ENCODE measurements at regions of chr1 and their contacts with region 1.

Region 1: GRCh38 chr1:53959664-53960250 is 13.6 kb downstream of the LRRC42 start:
- DNase-seq: peak in 3 of 9 experiments; percentile 17 to 70 (median 60)
- ATAC-seq: peak; percentile 93
- H3K4me3 ChIP-seq: no peak overlapping the region
- H3K4me3 Mint-ChIP-seq: no peak overlapping the region
- H3K27ac ChIP-seq: no peak overlapping the region
- H3K27ac Mint-ChIP-seq: no peak overlapping the region
- H3K4me1 ChIP-seq: no peaks in the 10 kb centered on the region
- H3K4me1 Mint-ChIP-seq: peaks cover 1% of the 10 kb centered on the region
- H3K27me3 ChIP-seq: no peaks in the 10 kb centered on the region
- H3K27me3 Mint-ChIP-seq: no peaks in the 10 kb centered on the region
- CTCF ChIP-seq: peak; percentile 76

Region 2: GRCh38 chr1:53249706-53250105 is 710.1 kb before region 1 on chr1:
- CTCF ChIA-PET with region 1: no interaction called
- POLR2A ChIA-PET with region 1: no interaction called
- intact Hi-C with region 1: no loop called
- DNase-seq: no peak
- ATAC-seq: no peak
- H3K4me3 ChIP-seq: no peak overlapping the region
- H3K4me3 Mint-ChIP-seq: no peak overlapping the region
- H3K27ac ChIP-seq: no peak overlapping the region
- H3K27ac Mint-ChIP-seq: no peak overlapping the region
- H3K4me1 ChIP-seq: no peaks in the 10 kb centered on the region
- H3K4me1 Mint-ChIP-seq: no peaks in the 10 kb centered on the region
- H3K27me3 ChIP-seq: no peaks in the 10 kb centered on the region
- H3K27me3 Mint-ChIP-seq: no peaks in the 10 kb centered on the region
- CTCF ChIP-seq: no peak

Region 3: DNA sequence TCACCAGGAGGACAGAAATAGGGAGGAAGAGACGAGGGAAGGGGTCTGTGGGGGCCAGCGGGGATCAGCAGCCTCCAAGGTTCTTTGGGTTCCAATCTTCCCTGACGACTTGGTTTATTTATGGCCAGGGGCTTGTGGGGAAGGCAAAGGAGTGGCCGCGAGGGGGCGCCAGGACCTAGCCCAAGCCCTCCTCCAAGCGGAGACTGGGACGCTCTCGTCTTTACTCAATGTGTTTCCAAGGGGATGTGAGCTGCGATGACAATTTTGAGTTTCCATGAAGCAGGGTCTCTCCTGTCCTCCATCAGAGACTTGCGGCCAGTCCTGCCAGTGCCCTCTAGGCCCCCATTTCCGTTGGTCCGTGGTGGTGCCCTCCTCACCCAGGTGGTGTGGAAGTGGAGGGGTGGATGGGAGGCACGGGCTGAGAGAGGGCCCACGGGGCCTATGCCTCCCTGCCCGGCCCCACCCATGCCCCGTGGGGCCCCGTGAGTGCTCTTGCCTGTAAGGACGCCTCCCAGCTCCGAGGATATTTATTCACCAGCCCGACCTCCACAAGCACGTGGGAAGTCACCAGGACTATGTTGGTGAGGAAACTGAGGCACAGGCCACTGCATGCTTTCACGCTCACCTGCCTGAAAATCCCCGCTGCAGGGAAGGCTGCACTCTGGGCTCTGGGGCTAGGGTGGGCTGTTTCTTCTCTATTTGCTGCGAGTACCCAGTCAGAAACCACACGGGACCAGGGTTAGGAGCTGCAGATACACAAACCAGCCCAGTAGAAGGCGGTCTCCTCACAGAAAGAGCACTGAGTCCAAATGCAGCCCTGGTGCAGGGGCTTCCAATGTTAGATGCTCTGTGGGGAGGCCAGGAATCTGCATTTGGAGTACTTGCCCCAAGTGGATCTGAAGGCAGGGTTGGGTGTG is 474.0 kb before region 1 on chr1:
- CTCF ChIA-PET with region 1: interaction called, 4 read pairs
- POLR2A ChIA-PET with region 1: no interaction called
- intact Hi-C with region 1: loop called (anchors 5 to 10 kb)
- DNase-seq: peak; percentile 38 to 79 (median 67)
- ATAC-seq: peak; percentile 44
- H3K4me3 ChIP-seq: no peak overlapping the region
- H3K4me3 Mint-ChIP-seq: no peak overlapping the region
- H3K27ac ChIP-seq: no peak overlapping the region
- H3K27ac Mint-ChIP-seq: no peak overlapping the region
- H3K4me1 ChIP-seq: no peaks in the 10 kb centered on the region
- H3K4me1 Mint-ChIP-seq: peaks cover 5% of the 10 kb centered on the region
- H3K27me3 ChIP-seq: peaks cover 2 to 6% of the 10 kb centered on the region in 2 experiments
- H3K27me3 Mint-ChIP-seq: peaks cover 21% of the 10 kb centered on the region
- CTCF ChIP-seq: peak; percentile 62

Region 4: DNA sequence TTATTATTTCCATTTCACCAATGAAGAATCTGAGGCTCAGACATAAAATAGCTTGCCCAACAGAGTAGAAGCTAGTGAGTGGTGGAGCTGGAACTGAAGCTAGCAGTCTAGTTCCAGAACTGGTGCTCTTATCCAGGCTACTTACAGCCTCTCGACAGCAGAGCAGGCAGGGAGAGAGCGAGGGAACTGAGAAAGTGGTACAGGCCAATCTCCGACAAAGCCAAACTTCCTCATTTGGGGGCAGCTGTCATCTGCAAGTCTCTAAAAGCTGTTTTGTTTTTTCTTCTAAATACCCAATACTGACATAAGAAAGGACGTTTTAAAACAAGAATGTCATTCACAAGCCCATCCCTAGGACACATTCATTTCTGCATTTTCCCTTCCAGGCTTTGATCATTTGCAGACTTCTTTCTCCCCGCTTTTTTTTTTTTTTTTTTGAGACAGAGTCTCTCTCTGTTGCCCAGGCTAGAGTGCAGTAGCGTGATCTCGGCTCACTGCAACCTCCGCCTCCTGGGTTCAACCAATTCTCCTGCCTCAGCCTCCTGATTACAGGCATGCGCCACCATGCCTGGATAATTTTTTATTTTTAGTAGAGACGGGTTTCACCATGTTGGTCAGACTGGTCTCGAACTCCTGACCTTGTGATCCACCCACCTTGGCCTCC is 90.2 kb before region 1 on chr1:
- CTCF ChIA-PET with region 1: interaction called, 14 read pairs
- POLR2A ChIA-PET with region 1: interaction called, 3 read pairs
- intact Hi-C with region 1: no loop called
- DNase-seq: no peak
- ATAC-seq: no peak
- H3K4me3 ChIP-seq: no peak overlapping the region
- H3K4me3 Mint-ChIP-seq: no peak overlapping the region
- H3K27ac ChIP-seq: no peak overlapping the region
- H3K27ac Mint-ChIP-seq: no peak overlapping the region
- H3K4me1 ChIP-seq: no peaks in the 10 kb centered on the region
- H3K4me1 Mint-ChIP-seq: no peaks in the 10 kb centered on the region
- H3K27me3 ChIP-seq: no peaks in the 10 kb centered on the region
- H3K27me3 Mint-ChIP-seq: no peaks in the 10 kb centered on the region
- CTCF ChIP-seq: no peak

Region 5: GRCh38 chr1:53878492-53879105 is 81.2 kb before region 1 on chr1:
- CTCF ChIA-PET with region 1: interaction called, 20 read pairs
- POLR2A ChIA-PET with region 1: no interaction called
- intact Hi-C with region 1: loop called in 1 of 2 experiments (anchors 1 kb)
- DNase-seq: peak in 2 of 9 experiments; percentile 40 to 51
- ATAC-seq: no peak
- H3K4me3 ChIP-seq: no peak overlapping the region
- H3K4me3 Mint-ChIP-seq: no peak overlapping the region
- H3K27ac ChIP-seq: no peak overlapping the region
- H3K27ac Mint-ChIP-seq: no peak overlapping the region
- H3K4me1 ChIP-seq: no peaks in the 10 kb centered on the region
- H3K4me1 Mint-ChIP-seq: peaks cover 8% of the 10 kb centered on the region
- H3K27me3 ChIP-seq: no peaks in the 10 kb centered on the region
- H3K27me3 Mint-ChIP-seq: no peaks in the 10 kb centered on the region
- CTCF ChIP-seq: no peak

Region 6: GRCh38 chr1:53913352-53914033 is 46.3 kb before region 1 on chr1:
- CTCF ChIA-PET with region 1: interaction called, 12 read pairs
- POLR2A ChIA-PET with region 1: no interaction called
- intact Hi-C with region 1: no loop called
- DNase-seq: peak in 1 of 9 experiments; percentile 13
- ATAC-seq: no peak
- H3K4me3 ChIP-seq: no peak overlapping the region
- H3K4me3 Mint-ChIP-seq: no peak overlapping the region
- H3K27ac ChIP-seq: no peak overlapping the region
- H3K27ac Mint-ChIP-seq: no peak overlapping the region
- H3K4me1 ChIP-seq: no peaks in the 10 kb centered on the region
- H3K4me1 Mint-ChIP-seq: peaks cover 13% of the 10 kb centered on the region
- H3K27me3 ChIP-seq: no peaks in the 10 kb centered on the region
- H3K27me3 Mint-ChIP-seq: no peaks in the 10 kb centered on the region
- CTCF ChIP-seq: no peak